Mammary epithelial cell (primary cell): ENCODE measurements at regions of chr3 and their contacts with region 1.

Region 1: DNA sequence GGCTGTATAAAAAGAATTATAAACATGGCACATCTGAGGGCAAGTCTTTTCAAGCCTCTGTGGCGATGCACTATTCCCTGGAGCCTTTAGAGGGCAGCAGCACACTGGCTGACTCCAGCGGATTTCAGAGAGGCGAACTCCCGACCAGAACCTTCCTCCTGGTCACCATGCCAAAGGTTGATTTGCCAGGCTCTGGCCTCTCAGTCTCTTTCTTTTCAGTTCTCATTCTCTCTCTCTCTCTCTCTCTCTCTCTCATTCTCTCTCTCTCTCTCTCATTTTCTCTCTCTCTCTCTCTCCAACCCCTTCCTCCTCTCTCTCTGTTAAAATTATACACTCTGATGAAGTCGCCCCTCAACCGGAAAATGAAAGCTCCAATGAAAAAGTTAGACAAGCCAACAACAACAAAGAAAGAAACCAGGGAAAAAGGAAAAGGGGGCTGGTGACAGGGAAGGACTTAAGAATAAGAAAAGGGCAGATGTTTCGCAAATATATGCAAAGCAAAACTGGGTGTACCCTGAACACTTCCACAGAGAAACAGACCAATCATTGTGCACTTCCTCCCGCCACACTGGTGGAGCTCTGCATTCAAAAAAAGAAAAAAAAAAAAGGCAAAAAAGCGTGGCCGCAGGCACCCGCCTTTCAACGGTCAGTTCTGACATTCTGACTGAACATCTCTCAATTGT is 90.2 kb downstream of the TIGIT start:
- DNase-seq: peak; percentile 66
- H3K4me3 ChIP-seq: peak overlapping the region; percentile 12 to 64 (median 25)
- H3K27ac ChIP-seq: peak overlapping the region; percentile 86
- H3K4me1 ChIP-seq: peaks cover 29% of the 10 kb centered on the region
- H3K27me3 ChIP-seq: no peaks in the 10 kb centered on the region
- CTCF ChIP-seq: peak; percentile 97 to 98

Region 2: DNA sequence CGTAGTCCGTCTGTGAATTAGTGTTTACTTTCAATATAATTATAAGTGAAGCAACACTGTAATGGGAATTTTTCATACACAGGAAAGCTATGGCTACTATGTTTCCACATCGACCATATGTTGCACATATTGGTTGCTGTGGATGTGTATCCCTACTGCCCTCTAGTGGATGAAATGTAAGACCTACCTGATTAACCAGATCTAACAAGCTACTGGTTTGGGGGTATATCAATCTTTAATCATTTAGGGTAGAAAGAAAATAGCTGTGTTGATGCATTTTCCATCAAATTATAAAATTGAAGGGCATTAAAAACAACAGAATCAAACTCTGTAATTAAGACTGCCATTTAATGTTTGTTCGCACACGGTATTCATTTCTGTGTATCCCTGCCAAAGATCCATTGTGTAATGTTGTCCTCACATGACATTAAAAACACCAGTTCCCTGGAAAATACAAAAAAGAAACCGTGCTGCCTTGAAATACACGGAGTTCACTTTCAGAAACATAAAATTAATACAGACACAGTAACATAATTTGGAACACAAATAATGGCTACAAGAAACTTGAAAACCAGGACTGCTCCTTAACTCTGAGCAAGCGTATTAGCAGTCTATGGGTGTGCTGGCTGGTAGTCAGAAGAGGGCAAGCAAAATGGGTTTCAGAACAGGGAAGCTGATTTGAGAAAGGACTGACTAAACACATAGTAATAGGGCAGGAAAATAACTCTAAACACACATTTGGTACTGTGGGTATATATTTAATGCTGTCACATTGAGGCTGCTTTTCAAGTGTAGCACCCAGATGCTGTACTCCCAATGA is 34.9 kb after region 1 on chr3:
- CTCF ChIA-PET with region 1: interaction called, 16 read pairs
- dilution Hi-C with region 1: no loop called
- in situ Hi-C with region 1: no loop called
- intact Hi-C with region 1: loop called (anchors 1 kb)
- DNase-seq: peak; percentile 76
- H3K4me3 ChIP-seq: peak overlapping the region in 1 of 3 experiments; percentile 8
- H3K27ac ChIP-seq: peak overlapping the region; percentile 58
- H3K4me1 ChIP-seq: peaks cover 10% of the 10 kb centered on the region
- H3K27me3 ChIP-seq: no peaks in the 10 kb centered on the region
- CTCF ChIP-seq: peak; percentile 69 to 78

Region 3: GRCh38 chr3:114452937-114453896 is 69.2 kb after region 1 on chr3:
- CTCF ChIA-PET with region 1: interaction called, 23 read pairs
- dilution Hi-C with region 1: no loop called
- in situ Hi-C with region 1: no loop called
- intact Hi-C with region 1: no loop called
- DNase-seq: no peak
- H3K4me3 ChIP-seq: no peak overlapping the region
- H3K27ac ChIP-seq: no peak overlapping the region
- H3K4me1 ChIP-seq: peaks cover 18% of the 10 kb centered on the region
- H3K27me3 ChIP-seq: no peaks in the 10 kb centered on the region
- CTCF ChIP-seq: no peak

Region 4: DNA sequence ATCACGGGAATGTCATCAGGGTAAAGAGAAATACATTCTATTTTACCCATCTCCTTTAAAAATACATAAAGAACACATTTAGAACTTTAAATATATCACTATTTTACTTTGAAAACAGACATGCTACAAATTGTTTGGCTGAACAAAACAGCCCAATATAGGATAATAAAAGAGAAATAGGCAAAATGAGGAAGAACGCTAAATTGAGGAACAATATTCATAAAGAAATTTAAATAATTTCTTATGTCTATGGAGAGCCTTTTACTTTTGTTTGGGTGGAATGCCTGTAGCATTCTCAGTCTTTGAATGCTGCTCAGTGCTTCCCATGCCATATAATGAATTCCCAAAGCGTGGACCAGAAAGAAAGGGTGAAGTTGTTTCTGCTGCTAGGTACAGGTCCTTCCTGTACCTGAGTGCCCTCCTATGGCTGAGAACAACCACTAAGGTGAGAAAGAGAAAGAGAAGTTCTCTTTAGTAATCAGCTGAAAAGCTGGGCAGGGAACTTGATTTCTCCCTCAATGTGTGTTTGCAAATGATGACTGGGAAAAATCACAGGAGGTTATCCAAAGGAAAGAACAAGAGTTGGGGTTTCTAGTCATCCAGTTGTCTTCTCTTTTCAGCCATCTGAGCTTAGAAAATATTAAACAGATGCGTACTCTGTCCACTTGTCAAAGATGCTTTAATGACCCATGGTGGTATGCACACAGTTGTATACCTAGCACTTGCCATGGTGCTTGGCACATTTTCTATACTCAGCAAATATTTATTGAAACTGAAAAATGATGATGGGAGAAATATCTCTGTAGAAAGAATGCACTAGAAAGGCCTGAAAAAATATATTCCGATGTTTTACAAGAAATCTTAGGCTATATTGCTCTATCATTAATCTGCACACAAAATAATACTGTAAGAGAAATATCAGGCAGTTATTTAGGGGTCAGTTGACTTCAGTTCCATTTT is 314.4 kb after region 1 on chr3:
- CTCF ChIA-PET with region 1: no interaction called
- dilution Hi-C with region 1: no loop called
- in situ Hi-C with region 1: no loop called
- intact Hi-C with region 1: loop called (anchors 1 kb)
- DNase-seq: no peak
- H3K4me3 ChIP-seq: no peak overlapping the region
- H3K27ac ChIP-seq: no peak overlapping the region
- H3K4me1 ChIP-seq: no peaks in the 10 kb centered on the region
- H3K27me3 ChIP-seq: no peaks in the 10 kb centered on the region
- CTCF ChIP-seq: peak in 1 of 2 donors; percentile 35

Region 5: DNA sequence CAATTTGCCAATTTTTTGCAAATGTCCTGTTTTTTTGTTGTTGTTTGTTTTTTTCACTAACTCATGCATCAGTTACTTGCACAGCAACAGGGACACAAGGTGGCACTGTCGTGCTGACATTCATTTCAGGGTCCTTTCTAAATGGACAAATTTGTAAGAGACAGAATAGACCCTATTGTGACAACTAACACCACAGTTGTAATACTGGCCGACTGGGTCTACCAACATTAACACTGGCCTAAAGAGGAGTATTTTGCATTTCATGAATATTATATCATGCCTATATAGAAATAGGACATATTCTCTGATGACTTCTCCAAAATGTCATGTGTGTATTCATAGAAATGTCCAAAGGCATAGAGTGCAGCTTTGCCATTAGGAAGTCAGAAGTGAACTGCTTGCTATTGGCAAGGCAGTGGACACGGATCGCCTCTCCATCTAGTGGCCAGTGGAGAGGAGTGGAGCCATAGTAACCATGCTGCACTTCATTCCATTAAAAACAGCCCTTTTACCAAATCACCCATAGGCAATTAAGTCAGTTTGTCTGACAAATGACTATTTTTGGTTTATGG is 708.3 kb after region 1 on chr3:
- CTCF ChIA-PET with region 1: no interaction called
- dilution Hi-C with region 1: no loop called
- in situ Hi-C with region 1: no loop called
- intact Hi-C with region 1: loop called (anchors 5 kb)
- DNase-seq: peak; percentile 39
- H3K4me3 ChIP-seq: no peak overlapping the region
- H3K27ac ChIP-seq: no peak overlapping the region
- H3K4me1 ChIP-seq: peaks cover under 1% of the 10 kb centered on the region
- H3K27me3 ChIP-seq: no peaks in the 10 kb centered on the region
- CTCF ChIP-seq: peak; percentile 68 to 79